Heart right ventricle (tissue), 16 donors: ENCODE measurements at regions of chr4 and their contacts with region 1.

Region 1: DNA sequence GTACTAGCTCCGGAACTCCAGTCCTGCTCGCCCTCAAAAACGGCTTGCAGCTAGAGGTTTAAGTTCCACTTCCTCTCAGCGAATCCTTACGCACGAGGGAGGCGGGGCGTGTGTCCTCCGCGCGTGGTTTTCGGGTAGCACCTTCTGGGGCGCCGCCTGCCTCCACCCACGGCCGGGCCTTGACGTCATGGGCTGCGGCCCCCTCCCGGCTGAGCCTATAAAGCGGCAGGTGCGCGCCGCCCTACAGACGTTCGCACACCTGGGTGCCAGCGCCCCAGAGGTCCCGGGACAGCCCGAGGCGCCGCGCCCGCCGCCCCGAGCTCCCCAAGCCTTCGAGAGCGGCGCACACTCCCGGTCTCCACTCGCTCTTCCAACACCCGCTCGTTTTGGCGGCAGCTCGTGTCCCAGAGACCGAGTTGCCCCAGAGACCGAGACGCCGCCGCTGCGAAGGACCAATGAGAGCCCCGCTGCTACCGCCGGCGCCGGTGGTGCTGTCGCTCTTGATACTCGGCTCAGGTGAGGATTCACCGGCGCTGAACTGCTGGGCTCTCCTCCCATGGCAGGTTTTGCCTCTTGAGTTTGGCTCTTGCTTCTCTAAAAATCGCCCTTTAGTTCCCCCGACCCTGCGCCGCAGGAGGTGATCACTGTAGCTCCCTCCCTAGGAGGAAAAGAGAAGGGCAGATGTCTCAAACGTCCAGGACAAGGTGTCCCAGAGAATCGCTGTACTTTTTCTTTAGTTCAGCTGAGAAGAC is at the start of gene AREG:
- DNase-seq: peak; percentile 59 to 62
- ATAC-seq: peak; percentile 70 to 93 (median 90)
- H3K4me3 ChIP-seq: peak within 1 kb of the TSS; percentile 16 to 75 (median 64)
- H3K27ac ChIP-seq: peak within 1 kb of the TSS in 8 of 10 donors; percentile 16 to 87 (median 48)
- H3K4me1 ChIP-seq: peaks cover 0 to 14% (median 8%) of the 10 kb centered on the region in 9 donors
- H3K27me3 ChIP-seq: no peaks in the 10 kb centered on the region
- CTCF ChIP-seq: peak in 8 of 9 donors; percentile 5 to 66 (median 59)
- total RNA-seq, gene AREG: 0.77 to 17.7 (median 4.3) TPM in 8 of 10 donors, not detected in the others

Region 2: GRCh38 chr4:74385386-74385785 is 59.7 kb before region 1 on chr4:
- intact Hi-C with region 1: loop called in 1 of 10 experiments (anchors 10 kb)
- DNase-seq: no peak
- ATAC-seq: no peak
- H3K4me3 ChIP-seq: no peak overlapping the region
- H3K27ac ChIP-seq: no peak overlapping the region
- H3K4me1 ChIP-seq: no peaks in the 10 kb centered on the region
- H3K27me3 ChIP-seq: no peaks in the 10 kb centered on the region
- CTCF ChIP-seq: no peak

Region 3: DNA sequence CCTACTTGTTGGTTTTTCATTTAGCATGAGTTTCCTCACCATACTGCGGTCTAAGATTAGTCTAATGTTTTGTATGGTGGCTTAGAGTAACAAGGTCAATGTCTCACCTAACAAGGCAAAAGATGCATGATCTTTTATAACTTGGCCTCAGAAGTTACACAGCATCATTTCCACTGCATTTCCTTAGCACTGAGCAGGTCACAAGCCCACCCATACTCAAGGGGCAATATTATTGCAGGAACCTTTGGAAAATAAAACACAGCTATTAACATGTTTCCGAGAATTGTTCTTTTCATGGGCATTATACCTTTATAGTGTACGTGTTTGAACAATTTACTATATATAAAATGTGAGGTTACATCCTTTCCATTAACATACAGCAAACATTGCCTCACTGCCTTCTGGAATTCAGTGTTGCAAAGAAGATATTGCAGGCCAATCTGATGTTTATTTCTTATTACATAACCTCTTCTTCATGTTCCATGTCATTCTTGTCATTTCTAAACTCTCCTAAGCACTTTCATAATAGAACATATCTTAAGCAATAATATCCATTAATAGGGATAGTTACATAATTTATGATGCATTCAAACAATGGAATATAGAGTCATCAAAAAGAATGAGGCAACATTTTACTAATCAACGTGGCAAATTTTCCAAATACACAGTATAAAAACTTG is 153.7 kb after region 1 on chr4:
- intact Hi-C with region 1: no loop called
- DNase-seq: no peak
- ATAC-seq: no peak
- H3K4me3 ChIP-seq: no peak overlapping the region
- H3K27ac ChIP-seq: no peak overlapping the region
- H3K4me1 ChIP-seq: no peaks in the 10 kb centered on the region
- H3K27me3 ChIP-seq: no peaks in the 10 kb centered on the region
- CTCF ChIP-seq: no peak